ENCODE measurements at regions of chr15 and their contacts with region 1.

Region 1: DNA sequence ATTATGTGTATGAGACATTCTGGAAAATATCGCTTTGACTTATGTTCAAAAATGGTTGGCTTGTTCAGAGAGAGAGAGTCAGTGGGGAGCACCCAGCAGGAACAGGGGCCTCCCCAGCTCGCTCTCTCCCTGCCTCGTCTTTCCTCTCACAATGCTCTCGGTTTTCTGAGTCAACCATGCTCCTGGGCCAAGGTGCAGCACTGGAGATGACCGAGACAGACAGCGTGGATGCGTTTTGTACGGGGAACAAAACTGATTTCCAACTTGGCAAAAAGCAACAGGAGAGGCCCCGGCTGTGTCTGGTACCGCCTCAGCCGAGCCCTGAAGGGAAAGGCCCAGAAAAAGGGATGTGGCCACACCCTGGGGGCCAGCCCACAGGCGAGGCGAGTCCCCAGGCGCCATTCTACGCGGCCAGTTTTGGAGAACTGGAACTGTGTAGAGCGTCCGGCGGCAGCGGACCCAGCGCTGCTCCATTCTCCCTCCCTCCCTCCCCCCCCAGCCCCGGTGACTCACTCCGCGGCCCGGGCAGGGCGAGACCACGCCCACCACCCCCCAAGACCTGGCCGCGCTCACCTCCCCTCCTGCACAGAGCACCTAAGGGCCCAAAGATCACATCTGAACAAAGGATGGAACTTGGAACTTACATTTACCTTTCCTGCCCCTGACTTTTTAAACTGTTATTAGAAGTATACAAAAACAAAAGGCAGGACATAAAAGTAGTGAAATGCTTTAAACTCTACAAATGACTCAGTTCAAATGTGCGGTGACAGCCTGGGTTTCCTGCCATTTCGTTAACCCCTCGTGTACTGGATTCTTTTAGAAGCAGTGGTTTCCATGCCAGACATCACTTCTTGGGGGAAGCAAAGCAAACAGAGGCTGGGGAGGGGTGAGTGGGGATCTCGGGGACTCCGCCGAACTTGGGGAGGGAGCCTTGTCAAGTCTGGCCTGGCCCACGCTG is 12.7 kb downstream of the ATP10A start:
- DNase-seq: peak; percentile 90
- H3K4me3 Mint-ChIP-seq: peak overlapping the region; percentile 84
- H3K27ac Mint-ChIP-seq: peak overlapping the region; percentile 99
- H3K4me1 Mint-ChIP-seq: peaks cover 76% of the 10 kb centered on the region
- H3K27me3 Mint-ChIP-seq: no peaks in the 10 kb centered on the region

Region 2: DNA sequence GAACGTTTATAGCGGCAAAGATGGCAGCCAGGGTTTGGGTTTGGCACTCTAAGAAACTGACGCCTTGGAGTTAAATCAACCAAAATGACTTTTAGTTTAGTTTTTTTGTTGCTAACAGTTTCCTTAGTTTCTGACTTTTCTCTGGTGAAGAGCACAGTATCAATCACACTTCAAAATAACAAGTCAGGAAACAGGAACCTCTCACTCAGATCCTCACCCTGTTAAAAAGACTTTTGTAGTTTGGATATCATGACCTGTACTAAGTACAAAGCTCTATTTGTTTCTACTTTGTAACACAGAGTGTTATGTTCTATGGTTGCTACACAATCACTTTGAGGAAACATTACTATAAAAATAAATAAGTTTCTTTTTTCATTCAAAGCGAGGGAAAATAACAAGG is 38.4 kb before region 1 on chr15:
- intact Hi-C with region 1: loop called (anchors 1 kb)
- DNase-seq: no peak
- H3K4me3 Mint-ChIP-seq: peak overlapping the region; percentile 78
- H3K27ac Mint-ChIP-seq: peak overlapping the region; percentile 85
- H3K4me1 Mint-ChIP-seq: peaks cover 59% of the 10 kb centered on the region
- H3K27me3 Mint-ChIP-seq: no peaks in the 10 kb centered on the region

Region 3: DNA sequence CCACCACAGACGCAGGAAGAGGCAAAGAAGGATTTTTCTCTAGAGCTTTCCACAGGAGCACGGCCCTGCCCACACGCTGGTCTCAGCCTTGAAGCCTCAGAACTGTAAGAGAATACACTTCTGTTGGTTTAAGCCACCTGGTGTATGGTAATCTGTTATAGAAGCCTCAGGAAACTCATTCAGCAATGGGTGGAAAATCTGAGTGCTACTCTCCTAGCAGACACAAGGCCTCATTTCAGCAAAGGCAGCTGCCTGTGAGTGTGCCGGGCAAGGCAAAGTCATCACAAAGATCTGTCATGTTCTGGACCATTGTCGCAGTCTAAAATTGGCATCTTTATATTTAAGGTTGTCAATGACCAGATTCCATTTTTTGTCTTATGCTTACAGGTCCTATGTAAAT is 18.3 kb before region 1 on chr15:
- intact Hi-C with region 1: loop called (anchors 1 kb)
- DNase-seq: no peak
- H3K4me3 Mint-ChIP-seq: peak overlapping the region; percentile 33
- H3K27ac Mint-ChIP-seq: peak overlapping the region; percentile 72
- H3K4me1 Mint-ChIP-seq: peaks cover 37% of the 10 kb centered on the region
- H3K27me3 Mint-ChIP-seq: no peaks in the 10 kb centered on the region

Region 4: DNA sequence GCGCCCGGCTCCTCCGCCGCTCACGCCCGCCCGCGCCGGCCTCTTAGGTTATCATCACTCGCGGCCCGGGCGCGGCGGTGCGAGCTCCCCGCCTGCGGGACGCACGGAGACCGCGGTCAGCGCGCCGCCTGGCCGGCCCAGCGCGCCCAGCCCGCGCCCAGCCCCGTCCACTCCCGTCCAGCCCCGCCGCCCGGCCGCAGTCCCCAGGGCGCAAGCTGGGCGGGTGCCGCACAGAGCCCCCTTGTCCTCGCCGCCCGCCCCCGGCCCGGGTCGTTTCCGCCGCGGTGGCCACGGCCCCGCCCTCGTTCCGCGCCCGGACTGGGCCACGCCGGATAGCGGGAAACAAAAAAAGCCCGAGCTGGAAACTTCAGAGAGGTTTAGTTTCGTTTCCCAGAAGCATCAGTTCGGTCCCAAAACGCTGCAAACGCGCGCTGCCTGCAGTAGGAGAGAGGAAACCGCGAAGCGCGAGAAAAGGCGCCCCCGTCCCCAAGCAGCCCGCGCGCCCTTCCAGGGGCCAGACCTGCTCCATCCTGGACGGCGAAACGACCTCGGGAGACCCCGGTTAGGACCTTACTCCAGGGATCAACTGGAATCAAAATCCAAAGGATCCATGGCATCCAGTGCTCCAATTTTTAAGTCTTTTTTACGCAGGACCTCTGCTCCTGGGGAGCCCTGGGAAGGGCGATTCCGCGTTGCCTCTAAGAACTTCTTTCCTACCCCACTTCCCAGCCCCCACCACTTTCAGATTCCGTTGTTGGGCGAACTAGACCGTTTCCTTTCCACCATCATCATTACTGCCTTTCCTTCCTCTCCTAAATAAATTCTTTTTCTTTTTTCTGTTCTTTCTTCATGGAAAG is 12.9 kb after region 1 on chr15 and contains the start of gene ATP10A:
- intact Hi-C with region 1: loop called (anchors 1 kb)
- DNase-seq: peak; percentile 93
- H3K4me3 Mint-ChIP-seq: peak within 1 kb of the TSS; percentile 97
- H3K27ac Mint-ChIP-seq: peak within 1 kb of the TSS; percentile 89
- H3K4me1 Mint-ChIP-seq: peaks cover 39% of the 10 kb centered on the region
- H3K27me3 Mint-ChIP-seq: peaks cover 5% of the 10 kb centered on the region
- total RNA-seq, gene ATP10A: 42.7 and 48.0 TPM in 2 replicates

Region 5: DNA sequence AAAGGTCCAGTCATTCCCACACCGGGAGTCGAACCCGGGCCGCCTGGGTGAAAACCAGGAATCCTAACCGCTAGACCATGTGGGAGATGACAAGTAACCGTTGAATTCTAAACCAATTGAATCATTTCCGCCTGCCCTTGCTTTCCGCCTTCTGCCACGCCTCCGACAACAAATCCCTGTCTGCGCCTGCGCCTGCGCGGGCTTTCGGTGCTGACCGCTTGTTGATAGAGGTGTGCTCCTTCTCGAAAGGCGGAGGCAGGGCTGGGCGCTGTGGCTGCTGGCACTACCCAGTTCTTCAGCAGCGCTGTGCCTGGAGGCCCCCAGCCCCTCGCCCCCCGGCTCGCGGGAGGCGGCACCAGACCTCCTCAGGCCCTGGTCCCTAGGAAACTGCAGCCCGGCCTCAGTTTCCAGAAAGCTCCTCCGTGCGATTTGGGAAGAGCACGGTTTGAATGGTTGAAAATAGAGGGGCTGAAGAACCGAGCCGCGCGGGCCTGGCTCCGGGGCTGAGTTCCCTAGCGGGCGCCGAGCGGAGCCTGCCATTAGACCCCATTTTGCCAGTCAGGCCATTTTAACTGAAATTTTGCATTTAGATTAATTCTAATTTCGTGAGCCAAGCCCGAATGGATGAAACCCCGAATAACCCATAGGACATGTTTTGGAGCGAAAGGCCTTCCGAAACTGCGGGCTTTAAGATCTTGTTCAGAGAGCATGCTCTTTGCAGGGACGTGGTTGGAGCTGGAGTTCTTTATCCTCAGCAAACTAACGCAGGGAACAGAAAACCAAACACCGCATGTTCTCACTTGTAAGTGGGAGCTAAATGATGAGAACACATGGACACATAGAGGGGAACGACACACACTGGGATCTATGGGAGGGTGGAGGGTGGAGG is 232.0 kb after region 1 on chr15:
- intact Hi-C with region 1: loop called (anchors 5 kb)
- DNase-seq: peak; percentile 98
- H3K4me3 Mint-ChIP-seq: peak overlapping the region; percentile 86
- H3K27ac Mint-ChIP-seq: peak overlapping the region; percentile 89
- H3K4me1 Mint-ChIP-seq: peaks cover 18% of the 10 kb centered on the region
- H3K27me3 Mint-ChIP-seq: peaks cover 11% of the 10 kb centered on the region

Measured in activated CD4-positive, alpha-beta T cell treated with anti-CD3 and anti-CD28 coated beads, Interleukin-2, amount 10 ng/mL, durations not matched to agents 24 days and 14 days (primary cell).